PC-9 (cell line): ENCODE measurements at regions of chr7 and their contacts with region 1.

Region 1: DNA sequence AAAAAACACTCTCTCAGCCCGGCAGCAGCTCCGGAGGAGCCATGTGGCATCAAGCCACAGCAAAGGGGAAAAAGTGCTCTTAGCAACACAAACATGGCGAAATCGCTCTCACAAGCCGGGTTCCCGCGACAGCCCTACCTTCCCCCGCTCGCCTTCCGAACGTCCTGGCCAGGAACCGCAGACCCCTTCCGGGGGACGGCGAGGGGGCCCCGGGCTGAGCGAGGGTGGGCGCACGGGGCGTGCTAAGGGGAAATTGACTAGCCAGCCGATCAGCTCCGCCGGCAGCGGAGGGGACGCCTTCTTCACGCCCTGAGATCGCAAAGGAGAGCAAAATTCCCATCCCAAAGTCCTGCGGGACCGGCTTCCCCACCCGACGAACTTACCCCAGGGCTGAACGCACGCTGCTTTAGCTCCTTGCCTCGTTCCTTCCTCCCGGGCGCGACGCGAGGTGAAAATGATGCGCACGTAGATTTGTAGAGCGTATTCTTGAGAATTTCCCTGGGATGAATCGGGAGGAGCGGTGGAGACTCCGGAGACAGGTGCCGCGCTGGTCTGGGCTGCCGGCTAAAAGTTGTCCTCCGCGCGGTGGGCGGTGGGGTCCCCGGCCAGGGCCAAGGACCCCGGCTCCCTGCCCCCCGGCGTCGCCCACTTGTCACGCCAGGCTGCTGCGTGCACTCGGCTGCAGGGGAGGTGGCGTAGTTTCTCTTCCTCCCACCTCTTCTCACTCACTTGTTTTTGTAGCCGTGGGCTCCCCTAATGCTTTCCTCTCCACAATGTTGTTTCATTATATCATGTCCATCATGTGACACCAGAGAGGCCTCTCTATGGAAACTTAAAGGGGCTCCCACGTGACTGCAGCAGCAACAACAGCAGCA is 220.1 kb upstream of the MKLN1 start:
- DNase-seq: peak; percentile 58 to 85
- H3K4me3 ChIP-seq: peak overlapping the region; percentile 73
- H3K27ac ChIP-seq: peak overlapping the region; percentile 90
- H3K4me1 ChIP-seq: peaks cover 36% of the 10 kb centered on the region
- H3K27me3 ChIP-seq: no peaks in the 10 kb centered on the region
- CTCF ChIP-seq: no peak

Region 2: GRCh38 chr7:129343099-129343700 is 1764.4 kb before region 1 on chr7:
- CTCF ChIA-PET with region 1: no interaction called
- POLR2A ChIA-PET with region 1: interaction called, 14 read pairs
- intact Hi-C with region 1: no loop called
- DNase-seq: peak; percentile 9 to 52
- H3K4me3 ChIP-seq: no peak overlapping the region
- H3K27ac ChIP-seq: no peak overlapping the region
- H3K4me1 ChIP-seq: peaks cover 8% of the 10 kb centered on the region
- H3K27me3 ChIP-seq: no peaks in the 10 kb centered on the region
- CTCF ChIP-seq: peak; percentile 85

Region 3: DNA sequence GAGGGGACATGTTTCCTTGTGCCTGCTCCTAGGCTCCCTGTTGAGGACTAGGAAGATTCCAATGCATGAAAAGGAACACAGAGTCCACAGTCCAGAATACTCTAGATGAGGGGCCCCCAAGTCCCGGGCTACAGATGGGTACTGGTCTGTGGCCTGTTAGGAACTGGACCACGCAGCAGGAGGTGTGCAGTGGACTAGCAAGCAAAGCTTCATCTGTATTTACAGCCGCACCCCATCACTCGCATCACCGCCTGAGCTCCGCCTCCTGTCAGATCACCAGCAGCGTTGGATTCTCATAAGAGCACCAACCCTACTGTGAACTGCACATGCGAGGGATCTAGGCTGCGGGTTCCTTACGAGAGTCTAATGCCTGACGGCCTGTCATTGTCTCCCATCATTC is 12.9 kb before region 1 on chr7:
- CTCF ChIA-PET with region 1: no interaction called
- POLR2A ChIA-PET with region 1: interaction called, 12 read pairs
- intact Hi-C with region 1: loop called (anchors 1 kb)
- DNase-seq: no peak
- H3K4me3 ChIP-seq: no peak overlapping the region
- H3K27ac ChIP-seq: no peak overlapping the region
- H3K4me1 ChIP-seq: peaks cover 25% of the 10 kb centered on the region
- H3K27me3 ChIP-seq: no peaks in the 10 kb centered on the region
- CTCF ChIP-seq: no peak

Region 4: GRCh38 chr7:131188367-131189339 is 81.1 kb after region 1 on chr7:
- CTCF ChIA-PET with region 1: no interaction called
- POLR2A ChIA-PET with region 1: interaction called, 20 read pairs
- intact Hi-C with region 1: loop called (anchors 1 kb)
- DNase-seq: peak; percentile 70 to 97
- H3K4me3 ChIP-seq: peak overlapping the region; percentile 31; the same call in 1 of the 2 replicates
- H3K27ac ChIP-seq: peak overlapping the region; percentile 94
- H3K4me1 ChIP-seq: peaks cover 76% of the 10 kb centered on the region
- H3K27me3 ChIP-seq: no peaks in the 10 kb centered on the region
- CTCF ChIP-seq: no peak

Region 5: DNA sequence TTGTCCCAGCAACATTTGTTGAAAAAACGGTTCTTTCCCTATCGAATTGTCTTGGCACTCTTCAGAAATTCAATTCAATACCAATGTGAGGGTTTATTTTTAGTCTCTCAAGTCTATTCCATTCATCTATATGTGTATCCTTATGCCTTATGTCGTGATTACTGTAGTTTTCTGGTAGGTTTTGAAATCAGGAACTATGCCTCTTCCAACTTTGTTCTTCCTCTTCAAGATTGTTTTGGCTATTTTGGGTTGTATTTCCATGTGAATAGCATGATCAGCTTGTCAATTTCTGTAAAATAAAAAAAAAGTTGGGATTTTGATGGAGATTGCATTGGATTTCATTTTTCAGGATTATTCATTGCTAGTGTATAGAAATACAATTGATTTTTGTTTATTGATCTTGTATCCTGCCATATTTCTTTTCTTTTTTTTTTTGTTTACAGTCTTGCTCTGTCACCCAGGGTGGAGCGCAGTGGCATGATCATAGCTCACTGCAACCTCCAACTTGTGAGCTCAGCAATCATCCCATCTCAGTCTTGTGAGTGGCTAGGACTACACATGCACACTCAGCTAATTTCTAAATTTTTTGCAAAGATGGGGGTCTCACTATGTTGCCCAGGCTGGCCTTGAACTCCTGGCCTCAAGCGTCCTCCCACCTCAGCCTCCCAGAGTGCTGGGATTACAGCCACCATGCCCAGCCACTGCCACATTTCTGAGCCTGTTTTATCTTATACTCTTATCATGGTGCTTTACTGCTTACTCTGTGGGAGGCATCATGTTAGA is 173.9 kb after region 1 on chr7:
- CTCF ChIA-PET with region 1: no interaction called
- POLR2A ChIA-PET with region 1: interaction called, 10 read pairs
- intact Hi-C with region 1: no loop called
- DNase-seq: no peak
- H3K4me3 ChIP-seq: no peak overlapping the region
- H3K27ac ChIP-seq: no peak overlapping the region
- H3K4me1 ChIP-seq: no peaks in the 10 kb centered on the region
- H3K27me3 ChIP-seq: no peaks in the 10 kb centered on the region
- CTCF ChIP-seq: no peak

Region 6: GRCh38 chr7:131346885-131347592 is 239.5 kb after region 1 on chr7:
- CTCF ChIA-PET with region 1: no interaction called
- POLR2A ChIA-PET with region 1: no interaction called
- intact Hi-C with region 1: loop called (anchors 5 kb)
- DNase-seq: peak; percentile 75 to 90
- H3K4me3 ChIP-seq: no peak overlapping the region
- H3K27ac ChIP-seq: peak overlapping the region; percentile 45
- H3K4me1 ChIP-seq: peaks cover 20% of the 10 kb centered on the region
- H3K27me3 ChIP-seq: no peaks in the 10 kb centered on the region
- CTCF ChIP-seq: no peak

Region 7: GRCh38 chr7:131424219-131424822 is 316.7 kb after region 1 on chr7:
- CTCF ChIA-PET with region 1: interaction called, 5 read pairs
- POLR2A ChIA-PET with region 1: interaction called, 17 read pairs
- intact Hi-C with region 1: loop called (anchors 2 kb)
- DNase-seq: peak in 1 of 2 experiments; percentile 43
- H3K4me3 ChIP-seq: no peak overlapping the region
- H3K27ac ChIP-seq: peak overlapping the region; percentile 36; the same call in 1 of the 2 replicates
- H3K4me1 ChIP-seq: no peaks in the 10 kb centered on the region
- H3K27me3 ChIP-seq: no peaks in the 10 kb centered on the region
- CTCF ChIP-seq: peak; percentile 69